ENCODE measurements at regions of chr6 and their contacts with region 1.

Region 1: DNA sequence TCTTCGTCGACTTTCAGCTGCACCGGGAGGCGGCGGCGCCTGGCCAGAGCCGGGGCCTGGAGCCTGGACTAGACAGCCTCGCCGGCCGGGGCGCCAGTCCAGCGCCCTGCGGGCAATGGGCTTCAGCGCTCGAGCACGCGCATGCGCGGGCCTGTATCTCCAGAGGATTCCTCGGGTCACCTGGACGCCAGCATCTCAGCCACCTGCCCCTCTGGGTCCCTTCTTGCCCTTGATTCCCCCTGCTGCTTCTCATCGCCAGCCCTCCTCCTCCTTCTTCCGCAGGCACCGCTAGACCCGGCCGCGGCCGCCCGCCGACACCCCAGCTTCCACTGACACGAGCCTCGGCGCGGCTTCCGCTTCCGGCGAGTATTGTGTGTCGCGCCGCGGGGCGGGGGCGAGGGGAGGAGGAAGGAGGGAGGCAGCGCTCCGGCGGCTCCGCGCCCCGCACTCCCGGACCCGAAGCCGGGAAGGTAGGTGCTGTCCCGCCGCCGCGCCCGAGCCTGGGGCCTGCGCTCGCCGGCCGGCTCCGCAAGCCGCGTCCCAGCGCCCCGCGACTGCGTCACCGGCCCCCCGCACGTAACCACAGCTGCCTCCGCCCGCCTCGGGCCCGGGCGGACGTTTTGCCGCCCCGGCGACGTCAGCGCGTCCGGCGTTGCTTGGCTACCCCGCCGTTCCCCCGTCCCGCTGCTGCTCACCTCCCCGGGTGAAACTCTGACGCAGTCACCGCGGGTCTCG is at the start of gene TRIM39:
- DNase-seq: peak; percentile 92
- H3K4me3 ChIP-seq: peak within 1 kb of the TSS; percentile 83 to 92 (median 88)
- H3K27ac ChIP-seq: peak within 1 kb of the TSS; percentile 95 to 98 (median 98)
- H3K4me1 ChIP-seq: peaks cover 0 to 29% (median 25%) of the 10 kb centered on the region in 4 donors
- H3K27me3 ChIP-seq: no peaks in the 10 kb centered on the region
- CTCF ChIP-seq: no peak
- EP300 ChIP-seq: no peak
- POLR2A ChIP-seq: peak; percentile 58 to 74
- total RNA-seq, gene TRIM39: 11.9 to 23.2 (median 14.4) TPM

Region 2: DNA sequence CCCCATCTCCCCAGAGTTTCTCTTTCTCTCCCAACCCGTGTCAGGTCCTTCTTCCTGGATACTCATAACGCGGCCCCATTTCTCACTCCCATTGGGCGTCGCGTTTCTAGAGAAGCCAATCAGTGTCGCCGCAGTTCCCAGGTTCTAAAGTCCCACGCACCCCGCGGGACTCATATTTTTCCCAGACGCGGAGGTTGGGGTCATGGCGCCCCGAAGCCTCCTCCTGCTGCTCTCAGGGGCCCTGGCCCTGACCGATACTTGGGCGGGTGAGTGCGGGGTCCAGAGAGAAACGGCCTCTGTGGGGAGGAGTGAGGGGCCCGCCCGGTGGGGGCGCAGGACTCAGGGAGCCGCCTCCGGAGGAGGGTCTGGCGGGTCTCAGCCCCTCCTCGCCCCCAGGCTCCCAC is 603.4 kb before region 1 on chr6 and contains the start of gene HLA-F:
- intact Hi-C with region 1: loop called (anchors 10 kb)
- DNase-seq: peak; percentile 95
- H3K4me3 ChIP-seq: peak within 1 kb of the TSS; percentile 67 to 89 (median 80)
- H3K27ac ChIP-seq: peak within 1 kb of the TSS; percentile 84 to 86 (median 85)
- H3K4me1 ChIP-seq: peaks cover 0 to 20% (median 8%) of the 10 kb centered on the region in 4 donors
- H3K27me3 ChIP-seq: no peaks in the 10 kb centered on the region
- CTCF ChIP-seq: no peak
- EP300 ChIP-seq: no peak
- POLR2A ChIP-seq: no peak
- total RNA-seq, gene HLA-F: 33.4 to 74.2 (median 38.5) TPM

Region 3: GRCh38 chr6:30212865-30213666 is 113.6 kb before region 1 on chr6 and contains the start of gene TRIM26:
- intact Hi-C with region 1: loop called (anchors 5 kb)
- DNase-seq: peak; percentile 99
- H3K4me3 ChIP-seq: peak within 1 kb of the TSS; percentile 91 to 96 (median 93)
- H3K27ac ChIP-seq: peak within 1 kb of the TSS; percentile 95 to 98 (median 98)
- H3K4me1 ChIP-seq: peaks cover 0 to 43% (median 34%) of the 10 kb centered on the region in 4 donors
- H3K27me3 ChIP-seq: no peaks in the 10 kb centered on the region
- CTCF ChIP-seq: no peak
- EP300 ChIP-seq: no peak
- POLR2A ChIP-seq: peak; percentile 92 to 96
- total RNA-seq, gene TRIM26: 34.2 to 42.7 (median 41.4) TPM

Region 4: GRCh38 chr6:30259140-30260035 is 67.3 kb before region 1 on chr6:
- intact Hi-C with region 1: loop called (anchors 5 kb)
- DNase-seq: peak; percentile 89
- H3K4me3 ChIP-seq: peak overlapping the region; percentile 72 to 95 (median 81)
- H3K27ac ChIP-seq: peak overlapping the region; percentile 85 to 92 (median 88)
- H3K4me1 ChIP-seq: peaks cover 0 to 9% (median 4%) of the 10 kb centered on the region in 4 donors
- H3K27me3 ChIP-seq: no peaks in the 10 kb centered on the region
- CTCF ChIP-seq: peak in 2 of 4 experiments; percentile 20 to 47
- EP300 ChIP-seq: no peak
- POLR2A ChIP-seq: no peak

Region 5: DNA sequence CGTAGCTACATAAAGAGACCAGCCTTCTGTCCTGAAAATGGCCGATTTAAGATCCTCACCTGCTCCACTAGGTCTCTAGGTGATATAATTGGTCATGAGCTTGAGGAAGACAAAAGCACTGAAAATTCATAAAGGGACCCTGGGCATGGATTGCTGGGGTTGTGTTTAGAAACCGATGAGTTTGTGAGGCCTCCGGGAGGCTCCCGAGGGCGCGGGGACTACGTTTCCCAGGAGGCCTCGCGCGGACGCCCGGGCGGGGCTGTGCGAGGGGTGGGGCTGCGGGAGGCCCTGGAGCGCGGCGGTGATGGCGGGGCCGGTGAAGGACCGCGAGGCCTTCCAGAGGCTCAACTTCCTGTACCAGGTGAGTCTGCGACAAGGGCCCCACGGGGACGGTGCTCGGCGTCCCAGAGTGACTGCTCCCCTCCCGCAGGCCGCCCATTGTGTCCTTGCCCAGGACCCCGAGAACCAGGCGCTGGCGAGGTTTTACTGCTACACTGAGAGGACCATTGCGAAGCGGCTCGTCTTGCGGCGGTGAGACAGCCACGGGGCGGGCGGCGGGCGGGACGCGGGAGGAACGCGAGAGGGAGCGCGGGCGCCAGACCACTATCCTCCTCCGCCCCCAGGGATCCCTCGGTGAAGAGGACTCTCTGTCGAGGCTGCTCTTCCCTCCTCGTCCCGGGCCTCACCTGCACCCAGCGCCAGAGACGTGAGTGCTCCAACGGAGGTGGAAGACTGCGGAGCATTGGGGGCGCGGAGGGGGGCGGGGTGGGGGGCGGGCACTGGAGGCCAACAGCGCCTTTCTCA is 18.4 kb after region 1 on chr6 and contains the start of gene RPP21:
- intact Hi-C with region 1: loop called (anchors 2 kb)
- DNase-seq: peak; percentile 90
- H3K4me3 ChIP-seq: peak within 1 kb of the TSS; percentile 61 to 92 (median 82)
- H3K27ac ChIP-seq: peak within 1 kb of the TSS; percentile 84 to 96 (median 94)
- H3K4me1 ChIP-seq: peaks cover 0 to 15% (median 10%) of the 10 kb centered on the region in 4 donors
- H3K27me3 ChIP-seq: no peaks in the 10 kb centered on the region
- CTCF ChIP-seq: no peak
- EP300 ChIP-seq: no peak
- POLR2A ChIP-seq: peak; percentile 58 to 77
- total RNA-seq, gene RPP21: 134 to 150 (median 141) TPM

Region 6: GRCh38 chr6:31079656-31080261 is 753.1 kb after region 1 on chr6:
- intact Hi-C with region 1: no loop called
- DNase-seq: peak; percentile 74
- H3K4me3 ChIP-seq: peak overlapping the region in 1 of 4 donors; percentile 19
- H3K27ac ChIP-seq: no peak overlapping the region
- H3K4me1 ChIP-seq: peaks cover 0 to 5% (median 4%) of the 10 kb centered on the region in 4 donors
- H3K27me3 ChIP-seq: peaks cover 0 to 31% (median 0%) of the 10 kb centered on the region in 3 donors
- CTCF ChIP-seq: peak; percentile 33 to 82 (median 61)
- EP300 ChIP-seq: no peak
- POLR2A ChIP-seq: no peak

Measured in sigmoid colon (tissue), 7 donors.